GM10248 (cell line): ENCODE measurements at regions of chr2 and their contacts with region 1.

Region 1: GRCh38 chr2:238263204-238264071 is 23.6 kb upstream of the HES6 start:
- DNase-seq: peak; percentile 82
- CTCF ChIP-seq: peak; percentile 89

Region 2: GRCh38 chr2:237858294-237859081 is 404.9 kb before region 1 on chr2:
- CTCF ChIA-PET with region 1: interaction called, 19 read pairs
- POLR2A ChIA-PET with region 1: no interaction called
- DNase-seq: peak; percentile 78
- CTCF ChIP-seq: peak; percentile 83

Region 3: DNA sequence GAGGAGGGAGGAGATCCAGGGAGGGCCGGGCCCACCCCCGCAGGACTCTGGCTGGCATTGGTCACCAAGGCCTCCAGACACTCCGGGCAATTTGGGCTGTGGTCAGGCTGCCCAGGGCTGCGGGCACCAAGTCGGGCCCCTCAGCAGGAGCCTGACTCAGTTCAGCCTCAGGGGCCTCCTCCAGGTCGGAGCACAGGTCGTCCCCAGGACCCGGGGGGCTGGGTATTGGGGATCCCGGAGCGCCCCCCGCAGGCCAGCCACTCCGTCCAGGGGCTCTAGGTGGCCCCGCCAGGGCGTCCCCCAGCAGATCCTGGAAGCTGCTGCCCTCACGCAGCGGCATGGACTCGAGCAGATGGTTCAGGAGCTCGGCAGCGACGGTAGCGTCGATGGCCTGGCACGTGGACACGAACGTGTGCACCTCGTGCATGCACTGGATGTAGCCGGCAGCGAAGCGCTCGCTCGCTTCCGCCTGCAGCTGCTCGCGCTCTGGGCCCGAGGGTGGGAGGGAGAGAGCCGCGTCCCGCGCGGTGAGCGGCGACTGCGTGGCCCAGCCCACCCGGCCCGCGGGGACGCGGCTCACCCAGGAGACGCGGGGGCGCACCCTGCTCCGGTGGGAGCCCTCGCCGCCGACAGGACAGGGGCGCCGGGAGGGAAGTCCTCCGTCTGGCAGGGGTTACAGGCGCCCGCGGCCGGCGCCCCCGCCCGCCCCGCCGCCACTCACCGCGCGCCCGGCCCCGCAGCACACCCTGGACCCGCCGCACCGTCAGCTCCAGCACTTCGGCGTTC is 24.5 kb before region 1 on chr2:
- CTCF ChIA-PET with region 1: interaction called, 10 read pairs
- POLR2A ChIA-PET with region 1: no interaction called
- DNase-seq: no peak
- CTCF ChIP-seq: no peak

Region 4: GRCh38 chr2:238247002-238247822 is 16.2 kb before region 1 on chr2:
- CTCF ChIA-PET with region 1: interaction called, 33 read pairs
- POLR2A ChIA-PET with region 1: no interaction called
- DNase-seq: no peak
- CTCF ChIP-seq: no peak

Region 5: GRCh38 chr2:238277695-238278094 is 14.3 kb after region 1 on chr2:
- CTCF ChIA-PET with region 1: interaction called, 56 read pairs
- POLR2A ChIA-PET with region 1: no interaction called
- DNase-seq: no peak
- CTCF ChIP-seq: no peak

Region 6: DNA sequence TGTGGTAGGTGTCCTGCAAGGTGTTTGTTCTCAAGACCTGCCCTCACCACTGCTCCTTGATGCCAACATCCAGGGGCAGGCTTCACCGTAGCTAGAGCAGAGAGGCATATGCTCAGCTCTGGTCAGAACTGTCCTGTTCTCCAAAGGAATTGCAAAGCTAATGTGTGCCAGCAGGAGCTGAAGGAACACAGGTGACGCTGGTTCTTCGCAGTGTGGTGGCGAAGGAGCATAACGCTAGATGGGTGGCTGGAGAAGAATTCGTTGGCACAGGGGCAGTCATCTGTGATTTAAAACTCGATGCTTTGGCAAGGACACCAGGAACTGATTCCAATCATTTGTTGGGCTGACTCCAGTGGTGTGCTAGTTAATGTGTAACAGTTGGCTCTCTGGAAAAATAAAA is 36.4 kb after region 1 on chr2:
- CTCF ChIA-PET with region 1: no interaction called
- POLR2A ChIA-PET with region 1: no interaction called
- DNase-seq: no peak
- CTCF ChIP-seq: no peak

Region 7: DNA sequence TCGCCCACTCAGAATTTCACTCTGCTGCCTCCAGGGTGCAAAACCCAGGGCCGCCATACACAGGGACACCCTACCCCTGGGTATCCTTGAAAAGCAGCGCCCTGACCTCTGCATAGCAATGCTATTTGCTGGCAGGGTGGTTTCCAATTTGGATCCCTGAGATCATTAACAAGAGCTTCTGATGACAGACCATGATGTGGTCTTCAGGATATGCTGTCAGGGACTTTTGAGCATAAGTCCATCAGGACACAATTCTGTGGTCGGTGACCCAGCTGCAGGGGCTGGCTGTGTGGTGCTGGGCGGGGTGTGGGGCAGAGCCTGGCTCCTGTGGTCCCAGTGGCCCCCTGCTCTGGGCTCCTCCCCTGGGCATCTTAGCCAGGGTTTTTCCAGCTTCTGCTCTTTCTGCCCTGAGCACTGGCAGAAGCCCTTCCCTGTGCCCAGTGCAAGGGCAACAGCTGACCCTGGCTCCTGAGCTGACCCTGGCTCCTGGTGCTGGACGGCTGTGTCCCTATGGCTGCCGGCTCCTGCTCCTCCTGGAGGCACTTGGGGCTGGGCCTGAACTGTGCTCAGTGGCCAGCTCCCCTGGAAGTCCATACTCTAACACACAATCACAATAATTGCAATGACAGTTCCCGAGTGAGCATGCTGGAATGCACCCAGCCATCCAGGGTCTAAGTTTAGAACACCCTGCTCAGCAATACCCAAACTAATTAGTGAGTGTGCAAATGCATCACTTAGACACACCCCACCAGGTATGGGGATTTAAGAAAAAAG is 865.9 kb after region 1 on chr2:
- CTCF ChIA-PET with region 1: no interaction called
- POLR2A ChIA-PET with region 1: no interaction called
- DNase-seq: no peak
- CTCF ChIP-seq: no peak